HEK293 (cell line): ENCODE measurements at regions of chr17 and their contacts with region 1.

Region 1: GRCh38 chr17:50094753-50095619 is at the start of gene PDK2:
- H3K4me3 ChIP-seq: peak within 1 kb of the TSS; percentile 85
- H3K27ac ChIP-seq: peak within 1 kb of the TSS; percentile 45
- H3K4me1 ChIP-seq: peaks cover 2% of the 10 kb centered on the region; the same call in 1 of the 2 replicates
- CTCF ChIP-seq: no peak; the same call in none of the 2 replicates

Region 2: DNA sequence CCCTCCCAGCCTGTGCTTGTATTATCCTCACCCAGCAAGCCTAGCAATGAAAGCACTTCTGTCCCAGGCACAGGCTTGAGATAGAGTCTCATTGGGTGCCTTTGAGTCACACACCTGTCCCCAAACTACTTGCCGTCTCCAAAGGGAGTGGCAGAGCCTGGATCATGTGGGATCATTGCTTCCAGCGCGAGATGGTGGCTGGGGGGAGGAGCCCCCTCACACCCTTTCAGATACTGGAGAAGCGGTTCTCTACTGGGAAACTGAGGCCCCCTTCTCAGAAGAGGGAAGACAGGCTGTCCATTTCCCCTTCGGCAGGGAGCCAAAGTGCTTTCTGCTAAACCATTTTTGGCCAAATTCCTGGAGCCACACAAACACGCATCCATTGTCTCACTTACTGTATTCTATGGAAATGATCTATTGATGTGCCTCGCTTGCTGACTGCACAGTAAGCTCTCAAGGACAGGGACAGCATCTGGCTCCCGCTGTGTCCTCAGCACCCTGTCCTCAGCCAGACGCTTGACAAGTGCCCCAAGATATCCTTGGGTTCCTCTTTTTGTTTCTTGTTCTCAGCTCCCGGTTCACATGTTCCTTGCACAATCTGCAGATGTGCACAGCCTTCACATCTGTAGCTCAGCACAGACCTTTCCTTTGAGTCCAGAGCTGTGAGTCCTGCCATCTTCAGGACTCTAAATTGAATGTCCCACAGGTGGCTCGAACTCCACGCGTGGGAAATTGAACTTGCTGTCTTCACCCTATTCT is 74.0 kb before region 1 on chr17:
- CTCF ChIA-PET with region 1: interaction called, 101 read pairs
- POLR2A ChIA-PET with region 1: no interaction called
- H3K4me3 ChIP-seq: no peak overlapping the region
- H3K27ac ChIP-seq: no peak overlapping the region
- H3K4me1 ChIP-seq: no peaks in the 10 kb centered on the region
- CTCF ChIP-seq: no peak

Region 3: GRCh38 chr17:50064258-50065001 is 30.6 kb before region 1 on chr17:
- CTCF ChIA-PET with region 1: interaction called, 28 read pairs
- POLR2A ChIA-PET with region 1: no interaction called
- H3K4me3 ChIP-seq: no peak overlapping the region
- H3K27ac ChIP-seq: no peak overlapping the region
- H3K4me1 ChIP-seq: peaks cover 5% of the 10 kb centered on the region
- CTCF ChIP-seq: no peak

Region 4: GRCh38 chr17:50139950-50140871 is 45.2 kb after region 1 on chr17:
- CTCF ChIA-PET with region 1: interaction called, 10 read pairs
- POLR2A ChIA-PET with region 1: no interaction called
- H3K4me3 ChIP-seq: no peak overlapping the region
- H3K27ac ChIP-seq: no peak overlapping the region
- H3K4me1 ChIP-seq: no peaks in the 10 kb centered on the region
- CTCF ChIP-seq: peak; percentile 87

Region 5: GRCh38 chr17:50177983-50178834 is 83.2 kb after region 1 on chr17:
- CTCF ChIA-PET with region 1: interaction called, 11 read pairs
- POLR2A ChIA-PET with region 1: interaction called, 5 read pairs
- H3K4me3 ChIP-seq: no peak overlapping the region
- H3K27ac ChIP-seq: peak overlapping the region; percentile 76
- H3K4me1 ChIP-seq: peaks cover 11% of the 10 kb centered on the region
- CTCF ChIP-seq: peak; percentile 99

Region 6: DNA sequence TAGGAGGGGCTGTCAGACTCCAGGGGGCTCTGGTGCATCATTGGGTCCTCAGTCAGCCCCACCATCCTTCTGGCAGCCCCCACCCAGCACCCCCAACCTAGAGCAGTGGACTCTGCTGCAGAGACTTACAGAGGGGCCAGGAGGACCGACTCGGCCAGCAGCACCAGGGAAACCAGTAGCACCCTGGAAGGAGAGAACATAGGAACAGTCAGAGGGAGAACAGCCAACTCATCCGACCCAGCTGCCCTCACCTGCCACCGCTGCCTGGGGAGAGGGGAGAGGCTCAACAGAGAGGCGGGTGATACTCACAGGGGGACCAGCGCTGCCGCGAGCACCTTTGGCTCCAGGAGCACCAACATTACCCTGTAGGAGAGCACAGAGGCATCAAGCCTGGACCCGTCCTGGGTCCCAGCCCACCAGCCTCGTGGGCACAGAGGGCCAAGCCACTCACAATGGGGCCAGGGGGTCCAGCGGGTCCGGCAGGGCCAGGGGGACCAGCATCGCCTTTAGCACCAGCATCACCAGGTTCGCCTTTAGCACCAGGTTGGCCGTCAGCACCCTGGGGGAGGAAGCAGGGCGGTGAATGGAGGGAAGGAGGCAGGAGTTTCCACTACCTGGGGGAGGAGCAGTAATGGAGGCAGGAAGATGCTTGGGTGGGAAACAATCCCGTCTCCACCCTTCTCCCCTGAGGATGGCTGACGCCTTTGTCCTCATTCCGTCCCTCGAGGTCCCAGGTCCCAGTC is 94.7 kb after region 1 on chr17:
- CTCF ChIA-PET with region 1: no interaction called
- POLR2A ChIA-PET with region 1: no interaction called
- H3K4me3 ChIP-seq: no peak overlapping the region
- H3K27ac ChIP-seq: no peak overlapping the region
- H3K4me1 ChIP-seq: no peaks in the 10 kb centered on the region
- CTCF ChIP-seq: no peak

Region 7: GRCh38 chr17:50304781-50305404 is 209.9 kb after region 1 on chr17:
- CTCF ChIA-PET with region 1: interaction called, 10 read pairs
- POLR2A ChIA-PET with region 1: no interaction called
- H3K4me3 ChIP-seq: no peak overlapping the region
- H3K27ac ChIP-seq: no peak overlapping the region
- H3K4me1 ChIP-seq: no peaks in the 10 kb centered on the region
- CTCF ChIP-seq: no peak